ENCODE measurements at regions of chr11 and their contacts with region 1.

Region 1: DNA sequence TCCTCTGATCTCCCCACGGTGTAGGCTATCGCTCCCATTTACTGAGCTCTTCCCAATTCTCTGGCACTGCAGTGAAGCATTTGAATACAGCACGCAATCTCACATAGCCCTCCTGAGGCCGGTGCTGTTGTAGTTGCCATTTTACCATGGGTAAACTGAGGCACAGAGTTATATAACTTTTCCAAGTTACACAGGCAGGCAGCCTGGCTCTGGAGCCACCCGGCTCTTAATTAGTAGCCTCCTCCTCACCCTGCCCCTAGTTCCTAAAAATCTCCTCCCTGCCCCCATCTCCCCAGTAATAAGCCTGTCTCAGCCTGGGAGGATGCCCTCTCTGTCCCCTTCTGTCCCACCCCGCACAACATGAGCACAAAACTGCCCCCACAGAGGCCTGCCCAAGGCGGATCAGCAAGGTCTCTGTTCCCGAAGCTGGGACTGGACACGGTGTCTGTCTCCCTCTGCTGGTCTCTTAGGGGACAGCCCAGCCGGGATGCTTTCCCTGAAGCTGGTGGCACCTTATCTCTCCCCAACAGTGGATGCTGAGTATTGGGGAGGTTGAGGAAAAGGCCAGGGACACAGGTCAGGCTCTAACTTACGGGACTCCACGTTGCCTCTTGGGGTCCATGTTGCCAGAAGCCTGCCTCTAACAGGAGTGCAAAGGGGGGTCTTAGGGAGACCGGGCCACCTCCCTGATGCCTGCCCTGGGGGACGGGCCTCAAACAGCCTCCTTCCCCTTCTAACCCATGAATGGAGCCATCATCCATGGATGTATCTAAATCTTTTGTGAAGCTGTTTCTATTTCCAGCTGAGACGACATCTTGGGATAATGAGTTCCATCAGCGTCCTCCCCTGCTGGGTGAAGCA is 9.1 kb upstream of the CLCF1 start:
- DNase-seq: peak; percentile 90
- H3K4me3 Mint-ChIP-seq: no peak overlapping the region
- H3K27ac Mint-ChIP-seq: no peak overlapping the region
- H3K4me1 Mint-ChIP-seq: peaks cover 6% of the 10 kb centered on the region
- H3K27me3 Mint-ChIP-seq: no peaks in the 10 kb centered on the region

Region 2: GRCh38 chr11:67082035-67082791 is 300.3 kb before region 1 on chr11:
- CTCF ChIA-PET with region 1: interaction called, 9 read pairs
- POLR2A ChIA-PET with region 1: no interaction called
- intact Hi-C with region 1: loop called (anchors 1 kb)
- DNase-seq: no peak
- H3K4me3 Mint-ChIP-seq: no peak overlapping the region
- H3K27ac Mint-ChIP-seq: no peak overlapping the region
- H3K4me1 Mint-ChIP-seq: peaks cover 20% of the 10 kb centered on the region
- H3K27me3 Mint-ChIP-seq: peaks cover 6% of the 10 kb centered on the region

Region 3: DNA sequence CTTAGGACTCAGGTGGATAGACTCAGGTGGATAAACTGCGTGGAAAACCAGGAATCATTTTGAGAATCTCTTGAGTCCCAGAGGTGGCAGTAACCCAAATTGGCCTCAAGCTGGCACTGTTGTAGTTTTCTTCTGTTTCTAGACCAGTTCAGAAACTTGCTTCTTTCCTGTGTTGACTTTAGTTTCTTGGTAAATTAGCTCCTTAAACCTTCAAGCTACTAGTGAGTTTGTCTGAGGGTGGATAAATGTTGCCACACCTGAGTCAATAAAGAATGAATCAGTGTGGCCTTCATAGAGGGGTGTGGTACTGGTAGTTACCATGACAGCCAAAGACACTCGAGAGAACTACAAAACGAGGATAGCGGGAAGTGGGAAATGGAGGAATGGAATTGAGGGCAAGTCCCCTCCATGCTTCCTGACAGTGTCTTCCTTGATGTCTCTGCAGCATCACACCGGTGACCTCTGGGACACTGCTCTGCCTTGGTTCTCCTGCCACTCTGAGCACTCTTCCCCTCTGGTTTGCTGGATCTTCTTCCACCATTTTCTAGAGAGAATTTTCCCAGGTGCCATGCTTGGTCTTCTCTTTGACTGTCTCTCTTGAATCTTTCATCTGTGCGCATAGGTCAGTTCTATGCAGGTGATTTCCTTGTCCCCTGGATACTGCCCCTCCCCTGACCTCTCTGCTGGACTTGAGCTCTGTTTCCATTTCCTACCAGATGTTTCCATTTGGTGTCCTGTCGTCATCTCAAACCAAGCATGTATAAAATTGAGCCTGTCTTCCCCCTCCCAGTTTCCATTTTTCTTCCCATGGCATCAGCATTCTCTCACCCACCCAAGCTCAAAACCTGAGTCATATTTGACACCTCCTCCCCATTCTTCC is 36.3 kb before region 1 on chr11:
- CTCF ChIA-PET with region 1: interaction called, 995 read pairs
- POLR2A ChIA-PET with region 1: interaction called, 3 read pairs
- intact Hi-C with region 1: loop called (anchors 1 kb)
- DNase-seq: peak; percentile 49
- H3K4me3 Mint-ChIP-seq: no peak overlapping the region
- H3K27ac Mint-ChIP-seq: peak overlapping the region; percentile 83
- H3K4me1 Mint-ChIP-seq: peaks cover 47% of the 10 kb centered on the region
- H3K27me3 Mint-ChIP-seq: no peaks in the 10 kb centered on the region

Measured in activated CD4-positive, alpha-beta memory T cell treated with anti-CD3 and anti-CD28 coated beads for 36 hours (primary cell).